GM12878 (cell line): ENCODE measurements at regions of chr20 and their contacts with region 1.

Region 1: DNA sequence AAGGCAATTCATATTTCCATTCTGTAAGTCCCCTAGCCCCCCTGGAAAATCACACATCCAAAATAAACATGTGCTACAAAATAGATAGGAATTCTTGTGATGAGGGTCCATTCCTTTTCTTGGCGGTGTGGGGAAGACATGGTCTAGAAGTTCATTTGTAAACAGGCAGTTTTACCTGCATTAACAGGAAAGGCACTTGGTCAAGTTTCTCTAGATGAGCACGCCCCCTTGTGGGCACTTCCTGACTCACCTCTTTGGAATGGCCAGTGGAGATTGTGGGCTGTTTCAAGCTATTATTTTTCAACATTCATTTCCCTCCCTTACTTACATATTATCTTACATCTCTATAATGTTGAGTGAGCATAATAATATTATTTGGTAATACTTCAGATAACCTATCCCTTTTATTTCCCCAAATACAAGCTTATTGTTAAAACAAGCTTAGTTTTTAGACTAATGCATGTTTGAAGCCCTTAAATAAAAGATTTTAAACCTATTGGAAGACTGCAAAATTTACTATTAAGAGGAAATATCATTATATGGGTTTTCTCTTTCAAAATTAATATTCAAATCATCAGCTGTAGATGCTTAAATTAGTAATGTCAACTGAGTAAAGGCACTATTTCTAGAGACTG is 92.1 kb downstream of the TASP1 start:
- DNase-seq: peak; percentile 17
- ATAC-seq: peak; percentile 95
- H3K4me3 ChIP-seq: no peak overlapping the region
- H3K27ac ChIP-seq: no peak overlapping the region
- H3K4me1 ChIP-seq: no peaks in the 10 kb centered on the region
- H3K27me3 ChIP-seq: no peaks in the 10 kb centered on the region
- CTCF ChIP-seq: peak; percentile 80 to 84 (median 81)
- EP300 ChIP-seq: no peak
- POLR2A ChIP-seq: no peak
- RAD21 ChIP-seq: peak; percentile 85

Region 2: DNA sequence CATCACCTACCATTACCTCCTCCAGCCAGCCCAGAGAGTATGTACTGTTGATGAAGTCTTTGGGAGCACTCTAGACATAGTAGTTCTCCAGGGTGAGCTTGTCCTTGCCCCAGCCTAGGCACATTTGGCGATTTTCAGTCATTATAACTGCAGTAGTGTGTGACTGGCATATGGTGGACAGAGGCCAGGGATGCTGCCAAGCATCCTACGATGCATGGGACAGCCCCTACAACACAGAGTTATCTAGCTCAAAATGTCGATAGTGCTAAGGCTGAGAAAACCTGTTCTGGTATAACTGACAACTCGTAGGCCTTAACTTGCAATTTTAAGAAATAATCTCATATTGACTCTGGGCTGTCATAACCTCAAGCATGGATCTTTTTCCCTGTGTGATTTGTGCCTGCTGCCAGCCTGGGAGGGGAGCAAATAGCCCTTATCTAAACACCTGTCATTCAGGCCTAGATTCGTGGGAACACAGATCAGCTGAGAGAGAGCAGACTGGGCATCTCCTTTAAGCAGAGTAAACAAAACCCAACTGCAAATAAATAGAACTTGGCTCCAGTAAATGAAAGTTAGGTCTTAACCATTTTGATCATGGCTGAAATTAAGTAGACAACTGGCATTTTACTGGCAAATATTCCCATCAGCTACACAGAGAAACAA is 435.2 kb before region 1 on chr20:
- CTCF ChIA-PET with region 1: interaction called, 61 read pairs
- POLR2A ChIA-PET with region 1: no interaction called
- RAD21 ChIA-PET with region 1: interaction called, 15 read pairs
- SMC1A ChIA-PET with region 1: interaction called, 124 read pairs
- in situ Hi-C with region 1: loop called (anchors 5 kb)
- intact Hi-C with region 1: no loop called
- DNase-seq: no peak
- ATAC-seq: no peak
- H3K4me3 ChIP-seq: no peak overlapping the region
- H3K27ac ChIP-seq: no peak overlapping the region
- H3K4me1 ChIP-seq: no peaks in the 10 kb centered on the region
- H3K27me3 ChIP-seq: no peaks in the 10 kb centered on the region; a peak in 1 of 4 replicates
- CTCF ChIP-seq: no peak
- EP300 ChIP-seq: no peak
- POLR2A ChIP-seq: no peak
- RAD21 ChIP-seq: no peak

Region 3: GRCh38 chr20:13302647-13303450 is 243.8 kb before region 1 on chr20:
- CTCF ChIA-PET with region 1: interaction called, 36 read pairs
- POLR2A ChIA-PET with region 1: no interaction called
- RAD21 ChIA-PET with region 1: interaction called, 26 read pairs
- SMC1A ChIA-PET with region 1: interaction called, 31 read pairs
- in situ Hi-C with region 1: no loop called
- intact Hi-C with region 1: no loop called
- DNase-seq: no peak
- ATAC-seq: peak; percentile 99
- H3K4me3 ChIP-seq: no peak overlapping the region
- H3K27ac ChIP-seq: no peak overlapping the region
- H3K4me1 ChIP-seq: no peaks in the 10 kb centered on the region
- H3K27me3 ChIP-seq: no peaks in the 10 kb centered on the region
- CTCF ChIP-seq: peak; percentile 55 to 83 (median 70)
- EP300 ChIP-seq: no peak
- POLR2A ChIP-seq: no peak
- RAD21 ChIP-seq: peak; percentile 64

Region 4: DNA sequence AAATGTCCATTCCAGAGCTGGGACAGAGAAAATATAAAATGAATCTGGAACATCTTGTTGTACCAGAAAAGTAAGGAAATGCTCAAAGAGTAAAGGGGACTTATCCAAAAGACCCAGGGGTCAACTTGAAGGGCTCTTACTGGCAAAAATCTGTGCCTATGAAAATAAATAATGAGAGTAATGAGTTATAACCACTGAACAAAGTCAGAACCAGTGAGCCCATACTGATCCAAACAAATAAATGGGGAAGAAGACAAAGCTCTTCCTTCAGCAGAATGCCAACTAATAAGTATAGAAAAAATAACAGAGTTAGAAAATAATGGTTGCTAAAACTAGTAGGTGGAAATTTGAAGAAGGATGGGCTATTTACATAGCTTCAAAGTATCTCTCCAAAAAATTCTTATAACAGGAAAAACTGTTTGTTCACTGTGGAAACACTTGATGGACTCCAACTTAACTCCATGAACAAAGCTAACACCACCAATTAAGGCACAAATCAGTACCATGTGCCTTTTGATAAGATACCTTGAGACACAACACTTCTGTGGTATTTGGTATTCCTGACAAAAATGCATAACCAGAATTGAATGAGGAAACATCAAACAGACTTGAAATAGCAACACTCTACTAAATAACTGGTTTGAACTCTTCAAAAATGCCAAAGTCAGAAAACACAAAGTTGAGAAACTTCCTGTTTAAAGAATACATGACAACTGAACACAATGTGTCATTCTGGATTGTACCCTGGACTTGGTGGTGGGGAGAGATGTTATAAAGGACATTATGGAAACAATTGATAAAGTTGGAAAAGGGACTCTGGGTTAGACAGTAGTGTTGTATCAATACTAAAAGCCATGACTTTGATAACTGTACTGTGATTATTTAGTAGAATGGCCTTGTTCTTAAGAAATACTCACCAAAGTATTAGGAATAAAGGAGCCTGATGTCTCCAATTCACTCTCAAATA is 128.1 kb before region 1 on chr20:
- CTCF ChIA-PET with region 1: interaction called, 11 read pairs
- POLR2A ChIA-PET with region 1: no interaction called
- RAD21 ChIA-PET with region 1: interaction called, 4 read pairs
- SMC1A ChIA-PET with region 1: interaction called, 4 read pairs
- in situ Hi-C with region 1: no loop called
- intact Hi-C with region 1: no loop called
- DNase-seq: no peak
- ATAC-seq: no peak
- H3K4me3 ChIP-seq: no peak overlapping the region
- H3K27ac ChIP-seq: no peak overlapping the region
- H3K4me1 ChIP-seq: no peaks in the 10 kb centered on the region
- H3K27me3 ChIP-seq: no peaks in the 10 kb centered on the region
- CTCF ChIP-seq: no peak
- EP300 ChIP-seq: no peak
- POLR2A ChIP-seq: no peak
- RAD21 ChIP-seq: no peak

Region 5: DNA sequence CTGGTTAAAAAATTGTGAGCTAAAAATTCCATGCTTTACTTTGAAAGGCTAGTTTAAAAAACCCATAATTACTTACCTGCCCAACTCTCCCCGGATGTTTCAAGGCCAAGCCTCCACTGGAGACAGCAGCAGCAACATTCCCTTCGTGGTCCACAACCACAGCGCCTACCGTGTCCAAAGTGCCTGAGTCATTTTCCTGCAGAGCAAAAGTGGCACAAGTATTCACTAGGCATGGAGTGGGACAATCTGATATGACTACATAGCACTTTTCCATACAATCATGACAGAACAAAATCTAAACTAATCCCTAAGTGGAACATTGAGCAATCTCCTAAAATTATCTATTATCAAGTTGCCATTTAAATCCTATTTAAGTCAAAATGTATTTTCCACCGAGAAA is 12.7 kb before region 1 on chr20:
- CTCF ChIA-PET with region 1: interaction called, 57 read pairs
- POLR2A ChIA-PET with region 1: interaction called, 3 read pairs
- RAD21 ChIA-PET with region 1: interaction called, 18 read pairs
- SMC1A ChIA-PET with region 1: interaction called, 32 read pairs
- in situ Hi-C with region 1: no loop called
- intact Hi-C with region 1: no loop called
- DNase-seq: no peak
- ATAC-seq: no peak
- H3K4me3 ChIP-seq: no peak overlapping the region
- H3K27ac ChIP-seq: no peak overlapping the region
- H3K4me1 ChIP-seq: no peaks in the 10 kb centered on the region
- H3K27me3 ChIP-seq: no peaks in the 10 kb centered on the region
- CTCF ChIP-seq: no peak
- EP300 ChIP-seq: no peak
- POLR2A ChIP-seq: no peak
- RAD21 ChIP-seq: no peak

Region 6: DNA sequence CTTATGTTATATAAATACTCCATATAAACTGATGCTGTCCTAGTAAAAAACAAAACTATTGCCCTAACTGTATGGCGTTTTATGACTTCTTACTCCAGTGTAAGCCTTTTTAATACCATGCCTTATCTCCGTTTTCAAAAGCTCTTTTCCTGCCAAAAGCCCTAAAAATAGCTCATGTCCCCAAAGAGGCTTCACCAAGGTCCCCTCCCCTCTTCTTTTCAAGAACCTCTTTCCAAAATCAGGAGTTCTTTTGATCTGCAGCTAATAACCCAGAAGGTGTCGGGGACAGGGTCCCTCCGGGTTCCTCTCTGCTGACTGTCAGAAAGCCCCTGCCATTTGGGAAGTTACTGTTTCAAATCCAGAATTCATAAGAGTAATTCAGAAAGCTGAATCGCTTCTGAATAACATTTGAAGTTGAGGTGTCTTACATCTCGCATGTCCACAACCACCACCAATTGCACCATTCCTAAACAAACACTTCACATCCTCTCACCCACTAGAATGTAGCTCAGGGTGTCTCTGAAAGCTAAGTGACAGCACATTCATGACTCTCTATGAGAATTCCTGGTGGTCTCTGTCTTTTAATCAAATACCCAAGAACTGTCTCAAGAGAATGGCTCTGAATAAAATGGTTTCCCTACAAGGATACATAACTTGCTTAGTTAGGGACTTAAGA is 78.8 kb after region 1 on chr20:
- CTCF ChIA-PET with region 1: no interaction called
- POLR2A ChIA-PET with region 1: no interaction called
- RAD21 ChIA-PET with region 1: no interaction called
- SMC1A ChIA-PET with region 1: no interaction called
- in situ Hi-C with region 1: no loop called
- intact Hi-C with region 1: no loop called
- DNase-seq: no peak
- ATAC-seq: no peak
- H3K4me3 ChIP-seq: no peak overlapping the region
- H3K27ac ChIP-seq: no peak overlapping the region
- H3K4me1 ChIP-seq: no peaks in the 10 kb centered on the region
- H3K27me3 ChIP-seq: no peaks in the 10 kb centered on the region
- CTCF ChIP-seq: no peak
- EP300 ChIP-seq: no peak
- POLR2A ChIP-seq: no peak
- RAD21 ChIP-seq: no peak

Region 7: GRCh38 chr20:13771853-13772453 is 225.3 kb after region 1 on chr20:
- CTCF ChIA-PET with region 1: interaction called, 93 read pairs
- POLR2A ChIA-PET with region 1: no interaction called
- RAD21 ChIA-PET with region 1: interaction called, 57 read pairs
- SMC1A ChIA-PET with region 1: interaction called, 50 read pairs
- in situ Hi-C with region 1: no loop called
- intact Hi-C with region 1: no loop called
- DNase-seq: no peak
- ATAC-seq: peak; percentile 64
- H3K4me3 ChIP-seq: no peak overlapping the region
- H3K27ac ChIP-seq: no peak overlapping the region
- H3K4me1 ChIP-seq: 0 out of 2 replicates have a peak, but pooled peaks cover 3% of the 10 kb centered on the region
- H3K27me3 ChIP-seq: no peaks in the 10 kb centered on the region
- CTCF ChIP-seq: peak in 2 of 3 experiments; percentile 20 to 43; a peak in 2 of 6 replicates
- EP300 ChIP-seq: no peak
- POLR2A ChIP-seq: no peak
- RAD21 ChIP-seq: peak; percentile 53